ENCODE measurements at regions of chr4 and their contacts with region 1.

Region 1: GRCh38 chr4:173735049-173735448 is 205.0 kb upstream of the HAND2 start:
- DNase-seq: no peak
- ATAC-seq: no peak

Region 2: GRCh38 chr4:173642509-173642908 is 92.5 kb before region 1 on chr4:
- intact Hi-C with region 1: no loop called
- DNase-seq: no peak
- ATAC-seq: peak; percentile 85

Region 3: GRCh38 chr4:173669460-173670179 is 65.4 kb before region 1 on chr4:
- intact Hi-C with region 1: no loop called
- DNase-seq: no peak
- ATAC-seq: peak; percentile 97

Region 4: GRCh38 chr4:173703021-173703420 is 32.0 kb before region 1 on chr4:
- intact Hi-C with region 1: loop called (anchors 5 kb)
- DNase-seq: no peak
- ATAC-seq: no peak

Measured in Right ventricle myocardium inferior (tissue), 1 donor.